Activated T-helper 2 cell treated with anti-CD3 and anti-CD28 coated beads, Interferon-gamma antibody, Interleukin-2, Interleukin-4, amounts not matched to agents 10 μg/mL and 5 μg/mL and 100 μg/mL, durations not matched to agents 14 hours and 24 hours and 36 hours (primary cell): ENCODE measurements at regions of chr5 and their contacts with region 1.

Region 1: GRCh38 chr5:72816311-72817145 is at the start of gene TNPO1:
- DNase-seq: peak; percentile 78
- H3K4me3 Mint-ChIP-seq: peak within 1 kb of the TSS; percentile 82
- H3K27ac Mint-ChIP-seq: peak within 1 kb of the TSS; percentile 69
- H3K4me1 Mint-ChIP-seq: peaks cover 19% of the 10 kb centered on the region
- H3K27me3 Mint-ChIP-seq: peaks cover 19% of the 10 kb centered on the region
- total RNA-seq, gene TNPO1: 112 and 121 TPM in 2 replicates

Region 2: GRCh38 chr5:72366324-72366976 is 450.1 kb before region 1 on chr5:
- intact Hi-C with region 1: loop called (anchors 5 kb)
- DNase-seq: peak; percentile 14
- H3K4me3 Mint-ChIP-seq: no peak overlapping the region
- H3K27ac Mint-ChIP-seq: no peak overlapping the region
- H3K4me1 Mint-ChIP-seq: peaks cover 11% of the 10 kb centered on the region
- H3K27me3 Mint-ChIP-seq: no peaks in the 10 kb centered on the region

Region 3: GRCh38 chr5:72611118-72611730 is 205.3 kb before region 1 on chr5:
- intact Hi-C with region 1: loop called (anchors 2 kb)
- DNase-seq: no peak
- H3K4me3 Mint-ChIP-seq: no peak overlapping the region
- H3K27ac Mint-ChIP-seq: no peak overlapping the region
- H3K4me1 Mint-ChIP-seq: no peaks in the 10 kb centered on the region
- H3K27me3 Mint-ChIP-seq: peaks cover 11% of the 10 kb centered on the region

Region 4: DNA sequence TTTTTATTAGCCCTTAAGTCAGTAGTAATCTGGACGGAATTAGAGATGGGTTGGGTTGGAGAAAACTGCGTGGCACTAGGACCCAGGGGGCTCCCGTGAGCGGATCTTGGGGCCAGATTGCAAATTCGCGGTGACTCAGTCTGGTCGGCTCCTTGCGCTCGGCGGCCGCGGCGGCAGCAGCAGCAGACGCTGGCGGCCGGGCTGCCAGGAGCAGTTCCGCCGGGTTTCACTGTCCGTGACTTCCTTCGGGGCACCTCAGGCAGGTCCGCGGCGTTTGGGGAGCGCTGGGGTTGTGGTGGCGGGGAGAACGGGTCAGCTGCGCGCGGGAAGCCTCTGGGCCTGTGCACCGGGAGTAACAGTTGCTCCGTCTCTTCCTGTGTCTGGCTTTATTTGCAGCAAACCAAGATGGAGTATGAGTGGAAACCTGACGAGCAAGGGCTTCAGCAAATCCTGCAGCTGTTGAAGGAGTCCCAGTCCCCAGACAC is 31.5 kb after region 1 on chr5:
- intact Hi-C with region 1: loop called (anchors 1 kb)
- DNase-seq: peak; percentile 82
- H3K4me3 Mint-ChIP-seq: peak overlapping the region; percentile 95
- H3K27ac Mint-ChIP-seq: peak overlapping the region; percentile 97
- H3K4me1 Mint-ChIP-seq: peaks cover 35% of the 10 kb centered on the region
- H3K27me3 Mint-ChIP-seq: peaks cover 14% of the 10 kb centered on the region

Region 5: GRCh38 chr5:72955768-72956323 is 139.3 kb after region 1 on chr5 and contains the start of gene FCHO2:
- intact Hi-C with region 1: loop called (anchors 5 kb)
- DNase-seq: peak; percentile 90
- H3K4me3 Mint-ChIP-seq: peak within 1 kb of the TSS; percentile 86
- H3K27ac Mint-ChIP-seq: peak within 1 kb of the TSS; percentile 45
- H3K4me1 Mint-ChIP-seq: peaks cover 15% of the 10 kb centered on the region
- H3K27me3 Mint-ChIP-seq: peaks cover 56% of the 10 kb centered on the region
- total RNA-seq, gene FCHO2: 1.3 and 1.6 TPM in 2 replicates